ENCODE measurements at regions of chr15 and their contacts with region 1.

Region 1: GRCh38 chr15:65275728-65276126 is 11.0 kb downstream of the PARP16 start:
- DNase-seq: no peak
- H3K4me3 ChIP-seq: no peak overlapping the region
- H3K27ac ChIP-seq: no peak overlapping the region
- H3K4me1 ChIP-seq: no peaks in the 10 kb centered on the region
- H3K27me3 ChIP-seq: no peaks in the 10 kb centered on the region
- CTCF ChIP-seq: no peak

Region 2: DNA sequence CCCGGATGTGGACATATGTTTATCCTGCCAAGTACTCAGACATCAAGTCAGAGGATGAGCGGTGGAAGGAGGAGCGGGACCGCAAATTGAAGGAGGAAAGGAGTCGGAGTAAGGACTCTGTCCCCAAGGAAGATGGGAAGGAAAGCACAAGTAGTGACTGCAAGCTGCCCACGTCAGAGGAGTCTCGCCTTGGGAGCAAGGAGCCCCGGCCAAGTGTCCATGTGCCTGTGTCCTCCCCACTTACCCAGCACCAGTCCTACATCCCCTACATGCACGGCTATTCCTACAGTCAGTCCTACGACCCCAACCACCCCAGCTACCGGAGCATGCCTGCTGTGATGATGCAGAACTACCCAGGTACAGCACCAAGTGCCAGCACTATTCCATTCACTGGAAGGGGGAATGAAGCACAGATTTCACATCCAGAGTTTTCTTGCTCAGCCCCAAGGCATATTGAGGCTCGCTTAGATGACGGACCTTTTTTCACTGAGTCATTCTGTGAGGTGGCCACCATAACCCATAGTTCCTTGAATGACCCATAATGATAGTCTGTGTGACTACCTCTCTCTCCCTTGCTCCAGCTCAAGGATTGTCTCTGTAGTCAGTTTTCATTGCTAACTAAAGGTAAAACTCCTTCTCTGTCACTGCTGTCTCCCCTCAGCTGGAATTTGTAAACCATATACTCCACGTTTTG is 597.5 kb before region 1 on chr15:
- intact Hi-C with region 1: no loop called
- DNase-seq: no peak
- H3K4me3 ChIP-seq: no peak overlapping the region
- H3K27ac ChIP-seq: no peak overlapping the region
- H3K4me1 ChIP-seq: no peaks in the 10 kb centered on the region
- H3K27me3 ChIP-seq: no peaks in the 10 kb centered on the region
- CTCF ChIP-seq: no peak

Region 3: GRCh38 chr15:64961013-64961412 is 314.7 kb before region 1 on chr15:
- intact Hi-C with region 1: no loop called
- DNase-seq: no peak
- H3K4me3 ChIP-seq: no peak overlapping the region
- H3K27ac ChIP-seq: no peak overlapping the region
- H3K4me1 ChIP-seq: no peaks in the 10 kb centered on the region
- H3K27me3 ChIP-seq: no peaks in the 10 kb centered on the region
- CTCF ChIP-seq: no peak

Region 4: GRCh38 chr15:65032801-65033537 is 242.8 kb before region 1 on chr15:
- intact Hi-C with region 1: loop called (anchors 5 kb)
- DNase-seq: peak; percentile 80
- H3K4me3 ChIP-seq: no peak overlapping the region
- H3K27ac ChIP-seq: peak overlapping the region; percentile 16
- H3K4me1 ChIP-seq: peaks cover 6% of the 10 kb centered on the region
- H3K27me3 ChIP-seq: no peaks in the 10 kb centered on the region
- CTCF ChIP-seq: peak; percentile 74

Region 5: DNA sequence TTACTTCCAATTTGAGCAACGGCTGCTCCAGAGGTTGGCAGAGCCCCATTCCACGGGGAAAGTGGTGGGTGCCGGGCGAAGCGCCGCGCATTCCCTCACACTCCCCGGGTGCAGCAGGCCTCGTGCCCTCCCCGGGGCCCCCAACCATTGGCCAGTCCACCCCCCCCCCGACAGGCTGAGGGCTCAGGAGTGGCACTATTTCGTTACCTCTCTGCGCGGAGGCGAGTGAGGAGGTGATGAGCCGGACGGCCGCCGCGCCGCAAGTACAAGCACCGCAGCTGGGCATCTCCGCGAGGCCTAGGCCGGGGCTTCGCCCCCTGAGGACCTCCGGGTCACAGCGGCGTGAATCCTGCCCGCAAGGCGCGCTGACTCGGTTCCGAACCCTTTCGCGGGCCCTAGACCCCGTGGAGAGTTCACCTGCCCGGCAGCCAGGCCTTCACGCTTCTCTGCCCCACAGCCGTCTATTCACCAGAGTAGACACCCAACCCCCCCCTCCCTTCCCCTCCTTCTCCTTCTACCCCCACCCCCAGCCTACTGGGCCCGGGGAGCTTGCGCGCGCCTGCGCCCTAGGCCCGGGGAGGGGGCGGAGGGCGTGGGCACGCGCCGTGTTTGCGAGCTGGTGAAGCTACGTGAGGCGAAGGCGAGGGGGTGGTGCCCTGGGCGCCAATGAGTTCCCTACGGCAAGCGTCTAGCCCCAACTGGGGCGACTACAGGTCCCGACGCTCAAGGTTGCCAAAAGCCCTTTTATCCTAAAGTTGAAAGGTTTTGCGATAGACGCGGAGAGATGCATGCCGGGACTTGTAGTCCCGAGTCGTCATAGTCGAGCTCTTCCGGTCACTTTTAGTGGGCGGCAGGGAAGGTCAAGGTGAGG is 90.6 kb before region 1 on chr15 and contains the start of gene CLPX:
- intact Hi-C with region 1: loop called (anchors 5 kb)
- DNase-seq: peak; percentile 90
- H3K4me3 ChIP-seq: peak within 1 kb of the TSS; percentile 97
- H3K27ac ChIP-seq: peak within 1 kb of the TSS; percentile 96
- H3K4me1 ChIP-seq: no peaks in the 10 kb centered on the region
- H3K27me3 ChIP-seq: no peaks in the 10 kb centered on the region
- CTCF ChIP-seq: no peak
- total RNA-seq, gene CLPX: 41.8 to 62.0 TPM

Region 6: GRCh38 chr15:65194826-65195547 is 80.7 kb before region 1 on chr15:
- intact Hi-C with region 1: loop called (anchors 5 kb)
- DNase-seq: no peak
- H3K4me3 ChIP-seq: no peak overlapping the region
- H3K27ac ChIP-seq: no peak overlapping the region
- H3K4me1 ChIP-seq: no peaks in the 10 kb centered on the region
- H3K27me3 ChIP-seq: no peaks in the 10 kb centered on the region
- CTCF ChIP-seq: no peak